CD8-positive, alpha-beta T cell (primary cell): ENCODE measurements at regions of chr14 and their contacts with region 1.

Region 1: DNA sequence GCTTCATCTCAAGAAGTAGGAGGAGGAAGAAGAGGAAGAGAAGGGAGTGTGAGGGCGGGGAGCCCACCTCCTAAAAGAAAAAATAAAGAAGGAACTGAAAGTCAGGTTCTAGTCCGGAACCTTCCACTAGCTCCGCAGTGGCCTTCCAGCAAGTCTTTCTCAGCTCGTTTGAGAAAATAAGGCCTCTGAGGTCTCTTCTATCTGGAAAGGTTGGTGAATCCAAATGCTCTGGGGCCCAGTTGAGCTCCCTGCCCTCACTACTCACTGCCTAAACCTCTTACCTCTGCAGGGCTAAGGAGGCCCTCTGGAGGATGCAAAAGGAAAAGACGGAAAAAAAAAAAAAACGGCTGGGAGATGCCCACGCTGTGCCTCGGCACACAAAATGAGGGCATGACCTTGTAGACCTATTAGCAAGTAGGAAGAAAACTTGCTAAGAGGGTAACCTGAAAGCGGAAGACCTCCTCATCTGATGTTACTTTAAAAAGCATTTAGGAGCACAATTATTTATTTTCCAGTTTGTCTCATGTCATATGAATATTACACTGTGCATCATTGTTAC is 35.9 kb downstream of the FBLN5 start:
- DNase-seq: peak in 7 of 9 experiments; percentile 11 to 78 (median 60)
- ATAC-seq: peak; percentile 96
- H3K4me3 ChIP-seq: no peak overlapping the region
- H3K4me3 Mint-ChIP-seq: no peak overlapping the region
- H3K27ac ChIP-seq: no peak overlapping the region
- H3K27ac Mint-ChIP-seq: no peak overlapping the region
- H3K4me1 ChIP-seq: peaks cover 5% of the 10 kb centered on the region
- H3K4me1 Mint-ChIP-seq: peaks cover 19% of the 10 kb centered on the region
- H3K27me3 ChIP-seq: no peaks in the 10 kb centered on the region
- H3K27me3 Mint-ChIP-seq: no peaks in the 10 kb centered on the region
- CTCF ChIP-seq: peak; percentile 56

Region 2: GRCh38 chr14:91264151-91265150 is 647.1 kb before region 1 on chr14:
- CTCF ChIA-PET with region 1: no interaction called
- POLR2A ChIA-PET with region 1: no interaction called
- intact Hi-C with region 1: no loop called
- DNase-seq: peak in 5 of 9 experiments; percentile 21 to 67 (median 52)
- ATAC-seq: peak; percentile 45
- H3K4me3 ChIP-seq: peak overlapping the region in 1 of 2 experiments; percentile 28
- H3K4me3 Mint-ChIP-seq: peak overlapping the region; percentile 64
- H3K27ac ChIP-seq: no peak overlapping the region
- H3K27ac Mint-ChIP-seq: peak overlapping the region; percentile 32
- H3K4me1 ChIP-seq: peaks cover 19% of the 10 kb centered on the region
- H3K4me1 Mint-ChIP-seq: peaks cover 42% of the 10 kb centered on the region
- H3K27me3 ChIP-seq: no peaks in the 10 kb centered on the region
- H3K27me3 Mint-ChIP-seq: no peaks in the 10 kb centered on the region
- CTCF ChIP-seq: no peak

Region 3: DNA sequence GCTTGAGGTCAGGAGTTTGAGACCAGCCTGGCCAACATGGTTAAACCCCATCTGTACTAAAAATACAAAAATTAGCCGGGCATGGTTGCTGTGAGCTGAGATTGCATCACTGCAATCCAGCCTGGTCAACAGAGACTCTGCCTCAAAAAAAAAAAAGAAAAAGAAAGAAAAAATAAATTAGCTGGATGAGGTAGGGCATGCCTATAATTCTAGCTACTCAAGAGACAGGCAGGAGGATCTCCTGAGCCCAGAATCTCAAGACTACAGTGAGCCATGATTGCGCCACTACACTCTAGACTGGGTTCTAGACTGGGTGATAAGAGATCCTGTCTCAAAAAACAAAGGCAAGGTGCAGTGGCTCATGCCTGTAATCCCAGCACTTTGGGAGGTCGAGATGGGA is 418.4 kb before region 1 on chr14:
- CTCF ChIA-PET with region 1: no interaction called
- POLR2A ChIA-PET with region 1: no interaction called
- intact Hi-C with region 1: loop called (anchors 5 to 10 kb)
- DNase-seq: no peak
- ATAC-seq: no peak
- H3K4me3 ChIP-seq: no peak overlapping the region
- H3K4me3 Mint-ChIP-seq: no peak overlapping the region
- H3K27ac ChIP-seq: no peak overlapping the region
- H3K27ac Mint-ChIP-seq: no peak overlapping the region
- H3K4me1 ChIP-seq: peaks cover 55% of the 10 kb centered on the region
- H3K4me1 Mint-ChIP-seq: peaks cover 71% of the 10 kb centered on the region
- H3K27me3 ChIP-seq: no peaks in the 10 kb centered on the region
- H3K27me3 Mint-ChIP-seq: no peaks in the 10 kb centered on the region
- CTCF ChIP-seq: no peak

Region 4: DNA sequence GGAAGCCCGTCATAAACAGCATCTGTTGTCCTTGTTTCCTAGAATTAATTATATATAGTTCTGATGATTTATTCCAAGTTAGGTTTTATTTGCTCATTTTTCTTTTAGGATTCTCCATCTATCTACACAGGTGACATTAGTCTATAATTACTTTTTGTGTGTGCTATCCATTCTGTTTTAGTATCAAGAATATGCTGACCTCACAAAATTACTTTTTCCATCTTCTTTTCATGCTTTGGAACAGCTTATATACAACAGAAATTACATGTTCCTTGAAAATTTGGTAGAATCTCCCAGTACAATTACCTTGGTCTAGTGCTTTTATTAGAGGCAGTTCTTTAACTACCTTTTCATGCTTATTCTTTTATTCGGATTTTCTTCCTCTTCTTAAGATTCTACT is 125.4 kb before region 1 on chr14:
- CTCF ChIA-PET with region 1: interaction called, 6 read pairs
- POLR2A ChIA-PET with region 1: interaction called, 3 read pairs
- intact Hi-C with region 1: loop called in 1 of 2 experiments (anchors 5 kb)
- DNase-seq: no peak
- ATAC-seq: no peak
- H3K4me3 ChIP-seq: no peak overlapping the region
- H3K4me3 Mint-ChIP-seq: no peak overlapping the region
- H3K27ac ChIP-seq: no peak overlapping the region
- H3K27ac Mint-ChIP-seq: no peak overlapping the region
- H3K4me1 ChIP-seq: no peaks in the 10 kb centered on the region
- H3K4me1 Mint-ChIP-seq: peaks cover 4% of the 10 kb centered on the region
- H3K27me3 ChIP-seq: no peaks in the 10 kb centered on the region
- H3K27me3 Mint-ChIP-seq: no peaks in the 10 kb centered on the region
- CTCF ChIP-seq: no peak

Region 5: GRCh38 chr14:91836119-91836881 is 75.3 kb before region 1 on chr14:
- CTCF ChIA-PET with region 1: interaction called, 6 read pairs
- POLR2A ChIA-PET with region 1: interaction called, 5 read pairs
- intact Hi-C with region 1: loop called in 1 of 2 experiments (anchors 1 kb)
- DNase-seq: peak; percentile 68 to 93 (median 88)
- ATAC-seq: peak; percentile 95
- H3K4me3 ChIP-seq: peak overlapping the region; percentile 55 to 70
- H3K4me3 Mint-ChIP-seq: peak overlapping the region; percentile 93
- H3K27ac ChIP-seq: peak overlapping the region; percentile 46 to 57
- H3K27ac Mint-ChIP-seq: peak overlapping the region; percentile 96
- H3K4me1 ChIP-seq: peaks cover 24% of the 10 kb centered on the region
- H3K4me1 Mint-ChIP-seq: peaks cover 80% of the 10 kb centered on the region
- H3K27me3 ChIP-seq: no peaks in the 10 kb centered on the region
- H3K27me3 Mint-ChIP-seq: no peaks in the 10 kb centered on the region
- CTCF ChIP-seq: no peak

Region 6: GRCh38 chr14:91872517-91873470 is 38.8 kb before region 1 on chr14:
- CTCF ChIA-PET with region 1: interaction called, 13 read pairs
- POLR2A ChIA-PET with region 1: interaction called, 11 read pairs
- intact Hi-C with region 1: loop called in 1 of 2 experiments (anchors 2 kb)
- DNase-seq: peak in 7 of 9 experiments; percentile 51 to 87 (median 77)
- ATAC-seq: peak; percentile 37
- H3K4me3 ChIP-seq: peak overlapping the region; percentile 31 to 47
- H3K4me3 Mint-ChIP-seq: peak overlapping the region; percentile 71
- H3K27ac ChIP-seq: peak overlapping the region; percentile 83 to 86
- H3K27ac Mint-ChIP-seq: peak overlapping the region; percentile 99
- H3K4me1 ChIP-seq: peaks cover 92% of the 10 kb centered on the region
- H3K4me1 Mint-ChIP-seq: peaks cover 99% of the 10 kb centered on the region
- H3K27me3 ChIP-seq: no peaks in the 10 kb centered on the region
- H3K27me3 Mint-ChIP-seq: no peaks in the 10 kb centered on the region
- CTCF ChIP-seq: no peak